ENCODE measurements at regions of chr9 and their contacts with region 1.

Region 1: DNA sequence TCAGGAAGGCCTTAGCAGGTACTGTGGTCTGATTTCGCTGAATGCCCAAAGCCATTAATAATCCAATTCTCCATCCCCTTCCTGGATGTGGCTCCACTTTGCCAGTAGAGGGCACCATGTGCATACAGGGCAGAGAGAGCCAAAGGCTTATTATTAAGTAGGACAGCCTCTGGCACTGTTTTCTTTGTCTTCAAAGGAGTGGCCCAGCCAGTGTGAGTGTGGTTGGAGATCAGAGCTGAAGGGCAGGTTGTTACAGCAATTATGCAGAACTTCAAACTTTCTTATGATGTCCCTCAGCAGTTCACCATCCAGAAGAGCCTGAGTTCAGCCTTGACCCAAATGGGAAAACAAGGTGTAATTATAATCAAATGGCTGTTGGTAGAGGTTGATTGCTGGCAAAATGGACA is 38.6 kb upstream of the CEMIP2 start:
- DNase-seq: peak; percentile 59 to 81
- ATAC-seq: peak; percentile 98 to 100
- H3K4me3 ChIP-seq: no peak overlapping the region
- H3K27ac ChIP-seq: no peak overlapping the region
- H3K4me1 ChIP-seq: peaks cover 3% of the 10 kb centered on the region; the same call in 1 of the 3 replicates
- CTCF ChIP-seq: peak; percentile 95
- EP300 ChIP-seq: no peak
- POLR2A ChIP-seq: no peak
- RAD21 ChIP-seq: peak; percentile 88 to 94

Region 2: GRCh38 chr9:71285191-71285656 is 521.7 kb before region 1 on chr9:
- CTCF ChIA-PET with region 1: interaction called, 11 read pairs
- POLR2A ChIA-PET with region 1: no interaction called
- DNase-seq: peak; percentile 23 to 68
- ATAC-seq: peak; percentile 83 to 93; a peak in 5 of 6 replicates
- H3K4me3 ChIP-seq: no peak overlapping the region
- H3K27ac ChIP-seq: no peak overlapping the region
- H3K4me1 ChIP-seq: no peaks in the 10 kb centered on the region
- CTCF ChIP-seq: peak; percentile 89
- EP300 ChIP-seq: no peak
- POLR2A ChIP-seq: no peak
- RAD21 ChIP-seq: peak; percentile 90 to 91

Region 3: GRCh38 chr9:71562140-71562539 is 244.8 kb before region 1 on chr9:
- CTCF ChIA-PET with region 1: no interaction called
- POLR2A ChIA-PET with region 1: no interaction called
- DNase-seq: no peak
- ATAC-seq: no peak
- H3K4me3 ChIP-seq: no peak overlapping the region
- H3K27ac ChIP-seq: no peak overlapping the region
- H3K4me1 ChIP-seq: peaks cover 15% of the 10 kb centered on the region; the same call in 2 of the 3 replicates
- CTCF ChIP-seq: no peak
- EP300 ChIP-seq: no peak
- POLR2A ChIP-seq: no peak
- RAD21 ChIP-seq: no peak

Region 4: DNA sequence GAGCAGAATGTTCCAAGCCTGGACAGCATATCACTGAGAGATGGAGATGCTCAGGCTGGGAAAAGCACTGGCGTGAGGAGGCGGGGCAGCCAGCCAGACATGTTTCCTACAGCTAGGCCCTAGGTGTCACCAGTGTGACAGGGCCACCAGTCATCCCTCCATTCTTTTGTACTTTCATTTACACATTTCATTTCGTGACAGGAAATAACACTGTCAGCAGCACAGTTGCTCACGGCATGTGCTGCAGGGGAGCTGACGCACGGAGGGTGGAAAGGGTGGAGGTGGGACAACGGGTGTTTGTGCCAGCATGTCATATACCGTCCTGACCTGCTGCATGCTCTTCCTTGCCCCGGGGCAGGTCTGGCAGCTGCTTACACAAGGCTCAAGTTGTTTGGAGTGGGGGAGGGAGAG is 23.8 kb before region 1 on chr9:
- CTCF ChIA-PET with region 1: interaction called, 11 read pairs
- POLR2A ChIA-PET with region 1: no interaction called
- DNase-seq: peak in 1 of 2 experiments; percentile 49
- ATAC-seq: peak; percentile 79 to 91
- H3K4me3 ChIP-seq: no peak overlapping the region
- H3K27ac ChIP-seq: peak overlapping the region; percentile 50 to 62; a peak in 5 of 6 replicates
- H3K4me1 ChIP-seq: peaks cover 25% of the 10 kb centered on the region
- CTCF ChIP-seq: no peak
- EP300 ChIP-seq: 0 out of 5 replicates have a peak, but pooled peaks of 1 of the 2 experiments have one; percentile 24
- POLR2A ChIP-seq: no peak
- RAD21 ChIP-seq: peak; percentile 26 to 34; a peak in 1 of 5 replicates

Region 5: DNA sequence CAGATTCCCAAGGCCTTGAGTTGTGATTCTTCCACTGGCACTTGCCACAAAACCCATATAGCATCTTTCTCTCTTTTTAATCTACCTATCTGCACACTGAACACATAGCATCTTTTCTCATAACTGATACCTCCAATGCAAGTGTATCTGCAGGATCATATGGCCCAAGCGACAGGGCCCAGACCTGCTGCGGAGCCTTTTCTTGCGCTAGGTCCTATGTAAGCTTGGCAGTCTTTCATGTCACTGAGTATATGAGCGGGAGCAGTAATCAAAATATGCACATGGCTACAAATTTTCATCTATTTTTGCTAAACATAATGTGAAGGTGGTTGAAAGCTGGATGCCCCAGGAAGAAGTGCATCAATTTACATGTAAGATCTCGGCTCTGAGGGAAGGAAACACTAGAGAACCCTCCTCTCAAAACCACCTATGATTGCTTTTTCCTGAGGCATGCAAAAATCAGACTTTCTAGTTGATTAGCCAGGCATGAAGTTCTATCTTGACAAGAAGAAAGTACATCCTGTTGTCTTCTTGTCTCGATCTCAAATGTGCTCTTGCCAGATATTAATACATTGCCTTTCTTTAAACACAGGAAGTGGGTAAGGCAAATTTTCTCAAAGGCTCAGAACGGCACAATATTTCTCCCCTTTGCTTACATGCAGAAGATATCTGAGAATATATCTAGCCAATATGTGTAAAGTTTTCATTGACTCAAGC is 11.6 kb before region 1 on chr9:
- CTCF ChIA-PET with region 1: interaction called, 26 read pairs
- POLR2A ChIA-PET with region 1: no interaction called
- DNase-seq: no peak
- ATAC-seq: no peak
- H3K4me3 ChIP-seq: no peak overlapping the region
- H3K27ac ChIP-seq: peak overlapping the region; percentile 84 to 88
- H3K4me1 ChIP-seq: peaks cover 63% of the 10 kb centered on the region
- CTCF ChIP-seq: no peak
- EP300 ChIP-seq: no peak
- POLR2A ChIP-seq: no peak
- RAD21 ChIP-seq: no peak

Region 6: DNA sequence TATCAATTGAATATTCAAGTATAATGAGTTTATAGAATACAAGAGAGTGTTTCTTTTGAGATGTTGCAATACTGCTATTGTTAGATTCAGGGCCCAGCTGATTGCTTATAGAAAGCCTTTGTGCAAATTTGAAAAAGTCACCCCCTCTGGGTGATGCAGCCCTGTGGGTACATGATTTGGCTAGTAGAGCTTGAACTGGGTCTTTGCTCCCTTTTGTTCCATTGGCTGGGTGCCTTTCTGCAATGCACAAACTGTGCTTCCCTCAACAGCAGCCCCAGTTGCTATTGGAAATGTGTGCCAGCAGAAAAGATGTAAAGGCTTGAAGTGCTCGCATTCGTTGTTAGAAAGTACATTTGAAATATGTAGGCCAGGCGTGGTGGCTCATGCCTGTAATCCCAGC is 23.2 kb after region 1 on chr9:
- CTCF ChIA-PET with region 1: interaction called, 13 read pairs
- POLR2A ChIA-PET with region 1: no interaction called
- DNase-seq: no peak
- ATAC-seq: no peak
- H3K4me3 ChIP-seq: no peak overlapping the region
- H3K27ac ChIP-seq: no peak overlapping the region
- H3K4me1 ChIP-seq: peaks cover 10% of the 10 kb centered on the region
- CTCF ChIP-seq: no peak
- EP300 ChIP-seq: no peak
- POLR2A ChIP-seq: no peak
- RAD21 ChIP-seq: no peak

Region 7: DNA sequence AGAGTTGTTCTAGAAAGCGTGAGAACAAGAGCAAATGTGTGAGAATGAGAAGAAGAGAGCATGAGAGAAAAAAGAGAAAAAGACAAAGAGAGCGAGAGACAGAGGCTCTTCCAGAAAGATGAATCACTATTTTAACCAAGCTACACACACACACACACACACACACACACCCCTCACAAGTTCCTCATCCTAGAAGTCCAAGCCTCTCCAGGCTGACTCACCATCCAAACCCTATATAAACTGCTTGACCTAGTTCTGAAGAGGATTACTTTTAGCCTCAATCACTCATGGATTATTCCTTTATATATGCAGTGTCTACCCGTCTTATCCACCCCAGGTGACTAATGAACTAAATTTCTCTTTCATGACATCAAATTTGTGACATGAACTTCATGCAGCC is 215.9 kb after region 1 on chr9:
- CTCF ChIA-PET with region 1: interaction called, 61 read pairs
- POLR2A ChIA-PET with region 1: no interaction called
- DNase-seq: peak in 1 of 2 experiments; percentile 58
- ATAC-seq: peak in 1 of 2 experiments; percentile 49; a peak in 2 of 6 replicates
- H3K4me3 ChIP-seq: no peak overlapping the region
- H3K27ac ChIP-seq: no peak overlapping the region
- H3K4me1 ChIP-seq: peaks cover 10% of the 10 kb centered on the region; the same call in 2 of the 3 replicates
- CTCF ChIP-seq: no peak
- EP300 ChIP-seq: no peak
- POLR2A ChIP-seq: no peak
- RAD21 ChIP-seq: no peak

Measured in A549 (cell line).